WTC11 (cell line): ENCODE measurements at regions of chr5 and their contacts with region 1.

Region 1: GRCh38 chr5:141245250-141245717 is at the start of gene PCDHB15:
- DNase-seq: peak; percentile 85
- ATAC-seq: peak; percentile 87
- H3K4me3 Mint-ChIP-seq: peak within 1 kb of the TSS; percentile 85
- H3K27ac Mint-ChIP-seq: peak within 1 kb of the TSS; percentile 93
- H3K4me1 Mint-ChIP-seq: peaks cover 18% of the 10 kb centered on the region
- H3K27me3 Mint-ChIP-seq: no peaks in the 10 kb centered on the region
- CTCF ChIP-seq: peak; percentile 70
- total RNA-seq, gene PCDHB15: 7.7 to 8.7 TPM (median 8.4 TPM) in 3 replicates

Region 2: GRCh38 chr5:140710899-140711552 is 534.3 kb before region 1 on chr5:
- CTCF ChIA-PET with region 1: no interaction called
- POLR2A ChIA-PET with region 1: no interaction called
- DNase-seq: peak; percentile 77
- ATAC-seq: peak; percentile 83
- H3K4me3 Mint-ChIP-seq: peak overlapping the region; percentile 92
- H3K27ac Mint-ChIP-seq: peak overlapping the region; percentile 77
- H3K4me1 Mint-ChIP-seq: peaks cover 4% of the 10 kb centered on the region; the same call in 1 of the 2 replicates
- H3K27me3 Mint-ChIP-seq: no peaks in the 10 kb centered on the region
- CTCF ChIP-seq: no peak

Region 3: GRCh38 chr5:141155540-141156374 is 89.5 kb before region 1 on chr5:
- CTCF ChIA-PET with region 1: interaction called, 14 read pairs
- POLR2A ChIA-PET with region 1: interaction called, 3 read pairs
- DNase-seq: peak; percentile 61
- ATAC-seq: peak; percentile 84
- H3K4me3 Mint-ChIP-seq: peak overlapping the region; percentile 49
- H3K27ac Mint-ChIP-seq: no peak overlapping the region
- H3K4me1 Mint-ChIP-seq: 0 out of 2 replicates have a peak, but pooled peaks cover 5% of the 10 kb centered on the region
- H3K27me3 Mint-ChIP-seq: no peaks in the 10 kb centered on the region
- CTCF ChIP-seq: peak; percentile 55

Region 4: GRCh38 chr5:141208478-141208877 is 36.8 kb before region 1 on chr5 and contains the start of gene PCDHB12:
- CTCF ChIA-PET with region 1: interaction called, 14 read pairs
- POLR2A ChIA-PET with region 1: no interaction called
- DNase-seq: peak; percentile 54
- ATAC-seq: peak; percentile 73
- H3K4me3 Mint-ChIP-seq: peak within 1 kb of the TSS; percentile 72
- H3K27ac Mint-ChIP-seq: no peak within 1 kb of the TSS
- H3K4me1 Mint-ChIP-seq: peaks cover 4% of the 10 kb centered on the region
- H3K27me3 Mint-ChIP-seq: peaks cover 3% of the 10 kb centered on the region
- CTCF ChIP-seq: 0 out of 2 replicates have a peak, but pooled peaks have one; percentile 27
- total RNA-seq, gene PCDHB12: 2.7 to 3.1 TPM (median 3.1 TPM) in 3 replicates

Region 5: DNA sequence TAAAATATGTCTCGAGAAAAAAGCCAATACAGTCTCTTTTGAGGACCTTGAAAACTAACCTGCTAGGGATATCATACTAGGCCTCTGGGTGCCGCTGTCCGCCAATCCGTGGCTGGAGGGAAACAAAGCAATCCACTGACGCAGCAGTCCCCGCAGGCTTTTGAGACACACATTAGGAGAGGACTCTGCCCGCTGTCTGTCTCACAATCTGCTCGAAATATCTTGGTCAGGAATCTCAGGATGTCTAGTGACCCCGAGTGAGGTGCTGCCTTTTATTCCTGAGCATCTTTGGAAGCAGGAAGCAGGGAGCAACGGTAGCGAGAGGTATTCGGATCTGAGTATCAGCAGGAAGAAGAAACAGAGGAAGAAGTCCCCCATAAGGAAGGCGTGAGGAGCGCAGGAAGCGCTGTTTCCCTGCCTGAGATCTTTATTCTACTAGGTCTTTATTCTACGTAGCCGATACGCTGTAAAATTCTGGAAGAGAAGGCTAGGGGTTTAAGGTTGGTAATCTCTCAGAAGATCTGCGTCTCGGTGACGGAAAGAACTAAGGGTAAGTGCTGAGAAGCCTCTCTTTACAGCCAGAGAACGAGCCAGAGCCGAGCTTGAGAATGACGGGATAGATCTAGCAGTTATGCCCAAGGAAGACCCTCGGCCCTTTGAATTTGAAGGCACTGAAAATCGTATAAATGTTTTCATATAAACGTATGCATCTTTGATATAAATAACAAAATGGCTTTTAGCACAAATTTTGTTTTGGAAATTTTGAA is 81.0 kb after region 1 on chr5:
- CTCF ChIA-PET with region 1: interaction called, 37 read pairs
- POLR2A ChIA-PET with region 1: interaction called, 4 read pairs
- DNase-seq: peak; percentile 76
- ATAC-seq: peak; percentile 91
- H3K4me3 Mint-ChIP-seq: peak overlapping the region; percentile 90
- H3K27ac Mint-ChIP-seq: peak overlapping the region; percentile 98
- H3K4me1 Mint-ChIP-seq: peaks cover 7% of the 10 kb centered on the region
- H3K27me3 Mint-ChIP-seq: peaks cover 12% of the 10 kb centered on the region
- CTCF ChIP-seq: peak; percentile 43; the same call in 1 of the 2 replicates

Region 6: GRCh38 chr5:141402553-141403260 is 157.4 kb after region 1 on chr5 and contains the start of gene PCDHGA9:
- CTCF ChIA-PET with region 1: interaction called, 19 read pairs
- POLR2A ChIA-PET with region 1: no interaction called
- DNase-seq: no peak
- ATAC-seq: no peak
- H3K4me3 Mint-ChIP-seq: no peak within 1 kb of the TSS
- H3K27ac Mint-ChIP-seq: no peak within 1 kb of the TSS
- H3K4me1 Mint-ChIP-seq: no peaks in the 10 kb centered on the region
- H3K27me3 Mint-ChIP-seq: peaks cover 14% of the 10 kb centered on the region
- CTCF ChIP-seq: no peak
- total RNA-seq, gene PCDHGA9: 1.9 to 2.9 TPM (median 2.3 TPM) in 3 replicates

Region 7: GRCh38 chr5:141512390-141512910 is 267.2 kb after region 1 on chr5:
- CTCF ChIA-PET with region 1: interaction called, 24 read pairs
- POLR2A ChIA-PET with region 1: no interaction called
- DNase-seq: peak; percentile 99
- ATAC-seq: peak; percentile 82
- H3K4me3 Mint-ChIP-seq: peak overlapping the region; percentile 87
- H3K27ac Mint-ChIP-seq: no peak overlapping the region
- H3K4me1 Mint-ChIP-seq: peaks cover 61% of the 10 kb centered on the region
- H3K27me3 Mint-ChIP-seq: no peaks in the 10 kb centered on the region
- CTCF ChIP-seq: peak; percentile 99

Region 8: GRCh38 chr5:141650851-141651727 is 405.8 kb after region 1 on chr5 and contains the start of gene FCHSD1:
- CTCF ChIA-PET with region 1: no interaction called
- POLR2A ChIA-PET with region 1: no interaction called
- DNase-seq: peak; percentile 94
- ATAC-seq: peak; percentile 95
- H3K4me3 Mint-ChIP-seq: peak within 1 kb of the TSS; percentile 99
- H3K27ac Mint-ChIP-seq: peak within 1 kb of the TSS; percentile 96
- H3K4me1 Mint-ChIP-seq: peaks cover 20% of the 10 kb centered on the region
- H3K27me3 Mint-ChIP-seq: no peaks in the 10 kb centered on the region
- CTCF ChIP-seq: no peak
- total RNA-seq, gene FCHSD1: 43.6 to 50.3 TPM (median 44.8 TPM) in 3 replicates